Naive thymus-derived CD8-positive, alpha-beta T cell (primary cell): ENCODE measurements at regions of chr14 and their contacts with region 1.

Region 1: GRCh38 chr14:77028384-77029231 is at the start of gene IRF2BPL:
- DNase-seq: peak; percentile 91 to 97 (median 94)
- ATAC-seq: peak; percentile 66 to 72
- H3K4me3 Mint-ChIP-seq: peak within 1 kb of the TSS; percentile 90 to 99 (median 96)
- H3K27ac Mint-ChIP-seq: peak within 1 kb of the TSS; percentile 95 to 99 (median 98)
- H3K4me1 Mint-ChIP-seq: peaks cover 32 to 64% (median 61%) of the 10 kb centered on the region in 4 donors
- H3K27me3 Mint-ChIP-seq: peaks cover 0 to 3% (median 0%) of the 10 kb centered on the region in 5 donors
- polyA plus RNA-seq, gene IRF2BPL: 1.9 to 3.3 (median 3.2) TPM

Region 2: GRCh38 chr14:76926521-76927251 is 101.9 kb before region 1 on chr14:
- POLR2A ChIA-PET with region 1: interaction called, 23 read pairs
- DNase-seq: peak; percentile 34 to 84 (median 70)
- ATAC-seq: peak; percentile 60 to 68
- H3K4me3 Mint-ChIP-seq: peak overlapping the region; percentile 63 to 85 (median 80)
- H3K27ac Mint-ChIP-seq: peak overlapping the region; percentile 68 to 96 (median 82)
- H3K4me1 Mint-ChIP-seq: peaks cover 36 to 87% (median 80%) of the 10 kb centered on the region in 4 donors
- H3K27me3 Mint-ChIP-seq: no peaks in the 10 kb centered on the region

Region 3: DNA sequence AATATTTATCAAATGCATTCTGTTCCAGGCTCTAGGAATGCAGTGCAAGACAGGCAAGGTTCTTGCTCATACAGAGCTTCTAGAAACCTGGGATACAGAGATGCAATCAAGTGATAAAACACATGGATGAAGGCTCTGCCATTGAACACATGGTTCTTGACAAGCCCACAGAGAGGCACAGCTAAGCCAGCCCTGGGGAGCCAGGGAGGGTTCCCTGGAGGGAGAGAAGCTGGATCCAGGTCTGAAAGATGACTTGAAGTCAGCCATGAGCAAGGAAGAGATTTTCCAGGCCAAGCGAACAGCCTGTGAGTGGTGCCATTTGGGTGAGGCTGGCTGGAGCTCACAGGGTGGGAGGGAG is 66.3 kb before region 1 on chr14:
- POLR2A ChIA-PET with region 1: interaction called, 86 read pairs
- DNase-seq: no peak
- ATAC-seq: no peak
- H3K4me3 Mint-ChIP-seq: peak overlapping the region; percentile 76 to 90 (median 83)
- H3K27ac Mint-ChIP-seq: peak overlapping the region; percentile 89 to 98 (median 95)
- H3K4me1 Mint-ChIP-seq: peaks cover 33 to 83% (median 82%) of the 10 kb centered on the region in 4 donors
- H3K27me3 Mint-ChIP-seq: no peaks in the 10 kb centered on the region

Region 4: GRCh38 chr14:77040059-77040740 is 11.6 kb after region 1 on chr14:
- POLR2A ChIA-PET with region 1: interaction called, 309 read pairs
- DNase-seq: peak; percentile 96 to 100 (median 98)
- ATAC-seq: peak; percentile 79 to 85
- H3K4me3 Mint-ChIP-seq: peak overlapping the region; percentile 79 to 93 (median 88)
- H3K27ac Mint-ChIP-seq: peak overlapping the region; percentile 94 to 100 (median 99)
- H3K4me1 Mint-ChIP-seq: peaks cover 49 to 96% (median 87%) of the 10 kb centered on the region in 4 donors
- H3K27me3 Mint-ChIP-seq: no peaks in the 10 kb centered on the region